MCF 10A (cell line): ENCODE measurements at regions of chr20 and their contacts with region 1.

Region 1: GRCh38 chr20:35954200-35954906 is at the start of gene SCAND1:
- DNase-seq: peak; percentile 97
- H3K4me3 Mint-ChIP-seq: peak within 1 kb of the TSS; percentile 97
- H3K27ac Mint-ChIP-seq: peak within 1 kb of the TSS; percentile 96
- H3K4me1 Mint-ChIP-seq: peaks cover 13% of the 10 kb centered on the region
- H3K27me3 Mint-ChIP-seq: no peaks in the 10 kb centered on the region
- CTCF ChIP-seq: peak; percentile 97
- total RNA-seq, gene SCAND1: 54.6 and 63.4 TPM in 2 replicates

Region 2: GRCh38 chr20:35511814-35512420 is 442.4 kb before region 1 on chr20:
- CTCF ChIA-PET with region 1: no interaction called
- POLR2A ChIA-PET with region 1: no interaction called
- intact Hi-C with region 1: loop called (anchors 10 kb)
- DNase-seq: peak; percentile 51
- H3K4me3 Mint-ChIP-seq: no peak overlapping the region
- H3K27ac Mint-ChIP-seq: no peak overlapping the region
- H3K4me1 Mint-ChIP-seq: peaks cover 13% of the 10 kb centered on the region
- H3K27me3 Mint-ChIP-seq: no peaks in the 10 kb centered on the region
- CTCF ChIP-seq: peak; percentile 67

Region 3: DNA sequence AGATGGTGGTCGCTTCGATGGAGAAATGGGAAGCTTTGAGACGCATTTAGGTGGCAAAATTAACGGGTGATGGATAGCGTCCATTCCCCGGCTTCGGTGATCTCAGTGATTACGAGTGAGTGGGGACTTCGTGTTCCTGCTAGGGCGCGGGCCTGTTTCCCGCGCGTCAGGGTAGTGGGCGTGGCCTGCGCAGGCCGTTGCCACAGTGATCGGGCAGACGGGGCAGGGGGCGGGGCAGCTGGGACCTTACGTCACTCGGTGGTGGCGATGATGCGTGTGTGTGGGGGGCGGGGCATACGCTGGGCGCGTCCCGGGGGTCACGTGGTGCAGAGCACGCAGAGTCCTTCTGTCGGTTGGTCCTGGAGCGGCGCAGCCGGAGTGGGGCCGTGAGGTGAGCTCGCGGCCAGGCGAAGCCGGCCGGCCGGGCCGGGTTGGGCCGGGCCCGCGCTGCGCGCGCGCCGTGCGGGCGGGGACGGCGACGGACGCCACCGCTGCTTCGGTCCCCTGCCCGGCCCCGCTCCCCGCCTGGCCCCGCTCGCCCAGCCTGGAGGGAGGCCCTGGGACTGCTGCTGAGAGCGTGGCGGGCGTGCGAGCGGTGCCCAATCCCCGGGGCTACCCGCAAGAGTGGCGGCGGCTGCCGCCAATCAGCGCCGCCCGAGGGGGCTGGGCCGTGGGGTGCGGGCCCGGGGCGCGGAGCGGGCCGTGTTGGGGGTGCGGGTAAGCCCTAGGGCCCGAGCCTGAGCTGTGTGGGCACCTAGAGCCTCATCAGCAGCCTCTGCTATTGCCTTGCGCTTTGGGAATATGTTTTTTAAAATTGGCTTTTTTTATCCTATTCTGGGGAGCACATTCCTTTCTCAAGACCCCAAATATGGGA is 182.4 kb before region 1 on chr20 and contains the start of gene PHF20:
- CTCF ChIA-PET with region 1: interaction called, 4 read pairs
- POLR2A ChIA-PET with region 1: interaction called, 36 read pairs
- intact Hi-C with region 1: no loop called
- DNase-seq: peak; percentile 92
- H3K4me3 Mint-ChIP-seq: peak within 1 kb of the TSS; percentile 91
- H3K27ac Mint-ChIP-seq: peak within 1 kb of the TSS; percentile 97
- H3K4me1 Mint-ChIP-seq: peaks cover 51% of the 10 kb centered on the region
- H3K27me3 Mint-ChIP-seq: no peaks in the 10 kb centered on the region
- CTCF ChIP-seq: no peak
- total RNA-seq, gene PHF20: 64.2 and 74.7 TPM in 2 replicates

Region 4: GRCh38 chr20:35942243-35942642 is 12.1 kb before region 1 on chr20:
- CTCF ChIA-PET with region 1: interaction called, 42 read pairs
- POLR2A ChIA-PET with region 1: interaction called, 23 read pairs
- intact Hi-C with region 1: no loop called
- DNase-seq: no peak
- H3K4me3 Mint-ChIP-seq: no peak overlapping the region
- H3K27ac Mint-ChIP-seq: no peak overlapping the region
- H3K4me1 Mint-ChIP-seq: no peaks in the 10 kb centered on the region
- H3K27me3 Mint-ChIP-seq: no peaks in the 10 kb centered on the region
- CTCF ChIP-seq: no peak

Region 5: DNA sequence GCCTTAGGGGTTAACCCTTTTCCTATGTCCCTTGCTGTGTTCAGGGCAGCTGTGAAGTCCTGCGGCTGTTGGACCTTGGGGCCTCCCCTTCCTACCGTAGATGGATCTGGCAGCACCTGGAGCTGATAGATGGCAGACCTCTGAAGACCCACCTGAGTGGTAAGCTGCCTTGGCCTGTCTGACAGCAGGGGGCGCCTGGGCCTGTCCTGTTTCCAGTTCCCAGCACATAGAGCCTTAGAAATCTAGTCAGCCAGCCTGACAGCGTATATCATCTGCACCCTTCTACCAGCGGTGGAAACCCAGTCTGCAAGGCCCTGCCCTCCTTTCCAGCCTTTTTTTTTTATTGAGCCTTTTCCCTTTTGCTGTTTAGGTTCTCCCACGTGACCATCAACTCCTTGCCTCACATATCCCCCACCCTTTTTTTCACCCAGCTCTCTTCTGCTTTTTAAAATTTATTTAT is 40.7 kb after region 1 on chr20:
- CTCF ChIA-PET with region 1: interaction called, 37 read pairs
- POLR2A ChIA-PET with region 1: interaction called, 30 read pairs
- intact Hi-C with region 1: no loop called
- DNase-seq: peak; percentile 85
- H3K4me3 Mint-ChIP-seq: no peak overlapping the region
- H3K27ac Mint-ChIP-seq: no peak overlapping the region
- H3K4me1 Mint-ChIP-seq: peaks cover 7% of the 10 kb centered on the region
- H3K27me3 Mint-ChIP-seq: peaks cover under 1% of the 10 kb centered on the region
- CTCF ChIP-seq: peak; percentile 86

Region 6: DNA sequence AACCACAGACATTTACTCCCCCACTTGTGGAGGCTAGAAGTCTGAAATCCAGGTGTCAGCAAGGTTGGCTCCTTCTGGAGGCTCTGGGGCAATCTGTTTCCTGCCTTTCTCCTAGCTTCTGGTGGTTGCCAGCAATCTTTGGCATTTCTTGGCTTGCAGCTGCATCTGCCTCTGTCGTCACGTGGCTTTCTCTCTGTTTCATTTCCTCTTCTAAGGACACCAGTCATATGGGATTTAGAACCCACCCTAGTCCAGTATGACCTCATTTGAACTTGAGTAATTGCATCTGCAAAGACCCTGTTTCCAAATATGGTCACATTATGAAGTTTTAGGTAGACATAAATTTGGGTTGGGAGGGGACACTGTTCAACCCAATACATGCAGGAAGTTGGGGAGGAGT is 144.0 kb after region 1 on chr20:
- CTCF ChIA-PET with region 1: interaction called, 7 read pairs
- POLR2A ChIA-PET with region 1: interaction called, 16 read pairs
- intact Hi-C with region 1: no loop called
- DNase-seq: peak; percentile 82
- H3K4me3 Mint-ChIP-seq: no peak overlapping the region
- H3K27ac Mint-ChIP-seq: peak overlapping the region; percentile 63
- H3K4me1 Mint-ChIP-seq: peaks cover 40% of the 10 kb centered on the region
- H3K27me3 Mint-ChIP-seq: no peaks in the 10 kb centered on the region
- CTCF ChIP-seq: no peak

Region 7: DNA sequence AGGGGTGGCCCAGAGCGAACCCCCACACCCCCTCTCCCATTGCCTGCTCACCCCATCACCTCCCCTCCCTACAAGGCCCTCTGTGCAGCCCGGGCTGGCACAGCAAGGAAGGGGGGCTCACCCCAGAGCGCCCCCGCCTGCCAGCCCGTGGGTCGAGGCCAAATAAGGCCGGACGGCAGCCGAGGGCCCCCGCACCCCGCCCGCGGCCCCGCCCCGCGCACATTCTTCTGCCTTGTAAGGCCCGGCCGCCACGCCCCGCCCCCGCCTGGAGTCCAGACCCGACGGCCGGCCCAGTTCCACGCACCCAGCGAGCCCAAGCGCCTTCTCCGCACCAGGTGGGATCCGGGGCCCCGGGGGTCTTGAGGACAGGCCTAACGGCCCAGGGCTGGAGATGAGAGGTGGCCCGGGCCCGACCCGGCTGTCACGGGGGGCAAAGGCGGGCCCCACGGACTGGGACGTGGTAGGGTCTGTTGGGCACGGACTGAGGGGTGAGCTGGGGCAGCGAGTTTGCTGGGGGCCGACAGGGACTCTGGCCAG is 586.9 kb after region 1 on chr20 and contains the start of gene MYL9:
- CTCF ChIA-PET with region 1: no interaction called
- POLR2A ChIA-PET with region 1: no interaction called
- intact Hi-C with region 1: no loop called
- DNase-seq: peak; percentile 20
- H3K4me3 Mint-ChIP-seq: no peak within 1 kb of the TSS
- H3K27ac Mint-ChIP-seq: peak within 1 kb of the TSS; percentile 61
- H3K4me1 Mint-ChIP-seq: peaks cover 8% of the 10 kb centered on the region
- H3K27me3 Mint-ChIP-seq: no peaks in the 10 kb centered on the region
- CTCF ChIP-seq: no peak
- total RNA-seq, gene MYL9: 4.3 and 7.9 TPM in 2 replicates